ENCODE measurements at regions of chr19 and their contacts with region 1.

Region 1: DNA sequence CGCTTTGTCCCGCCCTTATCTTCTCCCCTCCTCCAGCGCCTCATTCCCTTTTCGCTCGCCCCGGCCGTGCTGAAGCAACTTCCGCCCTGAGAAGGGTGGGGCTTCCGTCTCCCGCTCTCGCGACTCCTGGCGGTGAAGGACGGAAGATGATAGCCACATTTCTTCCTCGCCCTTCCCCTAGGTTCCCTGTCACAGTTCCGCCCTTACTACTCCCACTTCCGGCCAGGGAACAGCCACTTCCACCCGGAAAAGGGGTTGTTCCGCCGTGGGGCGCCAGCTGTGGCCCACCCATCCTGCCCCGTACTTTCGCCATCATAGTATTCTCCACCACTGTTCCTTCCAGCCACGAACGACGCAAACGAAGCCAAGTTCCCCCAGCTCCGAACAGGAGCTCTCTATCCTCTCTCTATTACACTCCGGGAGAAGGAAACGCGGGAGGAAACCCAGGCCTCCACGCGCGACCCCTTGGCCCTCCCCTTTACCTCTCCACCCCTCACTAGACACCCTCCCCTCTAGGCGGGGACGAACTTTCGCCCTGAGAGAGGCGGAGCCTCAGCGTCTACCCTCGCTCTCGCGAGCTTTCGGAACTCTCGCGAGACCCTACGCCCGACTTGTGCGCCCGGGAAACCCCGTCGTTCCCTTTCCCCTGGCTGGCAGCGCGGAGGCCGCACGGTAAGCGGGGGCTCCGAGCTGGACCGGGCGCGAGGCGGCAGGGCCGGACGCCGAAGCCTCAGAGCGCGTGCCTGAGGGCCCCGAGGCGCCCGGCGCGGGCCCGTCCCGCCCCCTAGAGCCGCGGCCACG is at the start of gene RPS19:
- DNase-seq: peak; percentile 97
- ATAC-seq: peak; percentile 89
- H3K4me3 ChIP-seq: peak within 1 kb of the TSS; percentile 73 to 100
- H3K27ac ChIP-seq: peak within 1 kb of the TSS; percentile 99
- H3K4me1 ChIP-seq: peaks cover 26 to 47% of the 10 kb centered on the region in 2 experiments
- H3K27me3 ChIP-seq: no peaks in the 10 kb centered on the region
- CTCF ChIP-seq: peak in 2 of 3 experiments; percentile 34 to 62; a peak in 3 of 6 replicates
- POLR2A ChIP-seq: peak; percentile 86
- RAD21 ChIP-seq: no peak
- total RNA-seq, gene RPS19: 3,020 TPM

Region 2: DNA sequence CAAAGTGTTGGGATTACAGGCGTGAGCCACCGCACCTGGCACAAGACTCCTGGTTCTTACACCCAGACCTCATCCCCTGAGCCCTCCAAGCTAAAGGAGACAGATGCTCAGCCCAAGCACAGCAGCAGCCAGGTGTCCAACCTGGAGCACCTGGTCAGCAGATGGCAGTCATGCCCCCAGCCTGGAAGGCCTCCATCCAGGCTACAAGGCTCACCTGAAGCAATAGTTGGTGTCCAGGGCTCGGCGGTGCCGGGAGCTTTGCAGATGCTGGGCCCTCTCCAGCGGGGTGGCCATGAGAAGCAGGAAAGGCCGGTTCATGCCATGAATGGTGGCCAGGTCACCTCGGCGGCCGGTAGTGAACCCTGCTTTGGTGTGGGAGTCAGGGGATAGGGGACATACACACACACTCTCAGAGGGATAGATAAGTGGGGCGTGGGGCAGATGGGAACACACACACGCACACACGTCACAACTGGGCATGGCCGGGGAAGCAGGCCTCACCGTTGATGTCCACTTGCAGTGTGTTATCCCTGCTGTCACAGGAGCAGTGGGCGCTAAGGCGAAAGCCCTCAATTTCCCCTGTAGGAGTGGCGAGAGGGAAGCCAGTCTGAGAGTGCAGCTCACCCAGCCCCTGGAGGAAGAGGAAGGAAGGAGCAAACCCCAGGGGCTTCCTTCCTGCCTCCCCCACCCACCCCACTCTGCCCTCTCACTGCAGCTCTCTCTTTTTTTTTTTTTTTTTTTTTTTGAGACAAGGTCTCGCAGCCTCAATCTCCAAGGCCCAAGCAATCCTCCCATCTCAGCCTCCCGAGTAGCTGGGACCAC is 517.9 kb before region 1 on chr19:
- CTCF ChIA-PET with region 1: no interaction called
- POLR2A ChIA-PET with region 1: no interaction called
- RAD21 ChIA-PET with region 1: no interaction called
- intact Hi-C with region 1: no loop called
- DNase-seq: no peak
- ATAC-seq: peak; percentile 78
- H3K4me3 ChIP-seq: no peak overlapping the region
- H3K27ac ChIP-seq: no peak overlapping the region
- H3K4me1 ChIP-seq: peaks cover 0 to 9% of the 10 kb centered on the region in 2 experiments; a peak in 1 of 4 replicates
- H3K27me3 ChIP-seq: no peaks in the 10 kb centered on the region
- CTCF ChIP-seq: peak in 2 of 3 experiments; percentile 22 to 31; a peak in 3 of 6 replicates
- POLR2A ChIP-seq: no peak
- RAD21 ChIP-seq: peak; percentile 51

Region 3: GRCh38 chr19:41837981-41838708 is 21.7 kb before region 1 on chr19:
- CTCF ChIA-PET with region 1: interaction called, 11 read pairs
- POLR2A ChIA-PET with region 1: interaction called, 9 read pairs
- RAD21 ChIA-PET with region 1: no interaction called
- intact Hi-C with region 1: no loop called
- DNase-seq: no peak
- ATAC-seq: no peak
- H3K4me3 ChIP-seq: no peak overlapping the region
- H3K27ac ChIP-seq: no peak overlapping the region
- H3K4me1 ChIP-seq: no peaks in the 10 kb centered on the region
- H3K27me3 ChIP-seq: peaks cover 15% of the 10 kb centered on the region; the same call in 1 of the 2 replicates
- CTCF ChIP-seq: no peak
- POLR2A ChIP-seq: no peak
- RAD21 ChIP-seq: no peak

Region 4: DNA sequence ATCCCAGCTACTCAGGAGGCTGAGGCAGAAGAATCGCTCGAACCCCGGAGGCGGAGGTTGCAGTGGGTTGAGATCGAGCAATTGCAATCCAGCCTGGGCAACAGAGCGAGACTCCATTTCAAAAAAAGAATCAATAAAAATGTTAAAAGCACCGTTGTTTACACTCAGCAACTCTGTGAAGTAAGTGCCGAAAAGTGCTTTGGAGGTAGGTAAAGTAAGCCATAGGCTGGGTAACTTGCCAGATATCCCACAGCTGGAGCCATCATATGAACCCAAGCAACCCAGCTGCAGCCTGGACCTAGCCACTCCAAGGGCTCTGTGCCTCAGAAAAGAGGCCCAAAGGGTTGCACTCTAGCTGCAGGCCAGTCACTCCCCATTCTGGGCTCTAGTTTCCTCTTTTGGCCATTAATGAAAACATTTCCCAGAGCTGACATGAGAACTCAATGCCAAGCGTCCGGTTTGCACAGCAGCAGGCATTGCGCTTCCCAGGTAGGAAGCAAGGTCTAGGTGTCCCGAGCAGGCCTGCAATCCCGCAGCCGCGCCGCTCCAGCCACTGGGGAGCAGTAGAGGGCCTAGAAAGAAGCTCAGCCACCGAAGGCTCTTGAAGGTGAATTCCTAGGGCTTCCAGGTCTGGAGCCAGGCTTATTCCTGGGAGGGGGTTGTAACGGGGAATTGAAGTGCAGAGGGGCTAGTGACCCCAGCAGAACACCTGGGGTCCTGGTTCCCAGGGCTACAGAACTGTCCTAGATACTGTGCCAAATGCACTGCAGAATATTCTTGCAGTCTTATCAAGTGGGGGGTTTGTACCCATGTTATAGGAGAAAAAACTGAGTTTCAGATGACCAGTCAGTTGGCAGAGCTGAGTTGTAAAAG is 13.2 kb after region 1 on chr19:
- CTCF ChIA-PET with region 1: interaction called, 9 read pairs
- POLR2A ChIA-PET with region 1: interaction called, 36 read pairs
- RAD21 ChIA-PET with region 1: no interaction called
- intact Hi-C with region 1: no loop called
- DNase-seq: peak; percentile 63
- ATAC-seq: peak; percentile 83
- H3K4me3 ChIP-seq: no peak overlapping the region
- H3K27ac ChIP-seq: peak overlapping the region; percentile 51
- H3K4me1 ChIP-seq: peaks cover 0 to 27% of the 10 kb centered on the region in 2 experiments; a peak in 2 of 4 replicates
- H3K27me3 ChIP-seq: no peaks in the 10 kb centered on the region
- CTCF ChIP-seq: peak; percentile 86 to 94 (median 88)
- POLR2A ChIP-seq: no peak
- RAD21 ChIP-seq: peak; percentile 89

Region 5: GRCh38 chr19:41883821-41884733 is 24.3 kb after region 1 on chr19:
- CTCF ChIA-PET with region 1: interaction called, 3 read pairs
- POLR2A ChIA-PET with region 1: interaction called, 18 read pairs
- RAD21 ChIA-PET with region 1: no interaction called
- intact Hi-C with region 1: no loop called
- DNase-seq: peak; percentile 94
- ATAC-seq: peak; percentile 86
- H3K4me3 ChIP-seq: peak overlapping the region; percentile 97
- H3K27ac ChIP-seq: peak overlapping the region; percentile 73
- H3K4me1 ChIP-seq: peaks cover 29 to 54% of the 10 kb centered on the region in 2 experiments
- H3K27me3 ChIP-seq: no peaks in the 10 kb centered on the region
- CTCF ChIP-seq: no peak
- POLR2A ChIP-seq: peak; percentile 86
- RAD21 ChIP-seq: no peak

Region 6: GRCh38 chr19:41967054-41967783 is 107.4 kb after region 1 on chr19:
- CTCF ChIA-PET with region 1: no interaction called
- POLR2A ChIA-PET with region 1: no interaction called
- RAD21 ChIA-PET with region 1: no interaction called
- intact Hi-C with region 1: no loop called
- DNase-seq: no peak
- ATAC-seq: no peak
- H3K4me3 ChIP-seq: no peak overlapping the region
- H3K27ac ChIP-seq: no peak overlapping the region
- H3K4me1 ChIP-seq: no peaks in the 10 kb centered on the region
- H3K27me3 ChIP-seq: no peaks in the 10 kb centered on the region
- CTCF ChIP-seq: no peak
- POLR2A ChIP-seq: no peak
- RAD21 ChIP-seq: no peak

Region 7: GRCh38 chr19:42038666-42039065 is 178.8 kb after region 1 on chr19:
- CTCF ChIA-PET with region 1: no interaction called
- POLR2A ChIA-PET with region 1: no interaction called
- RAD21 ChIA-PET with region 1: no interaction called
- intact Hi-C with region 1: no loop called
- DNase-seq: no peak
- ATAC-seq: no peak
- H3K4me3 ChIP-seq: no peak overlapping the region
- H3K27ac ChIP-seq: no peak overlapping the region
- H3K4me1 ChIP-seq: peaks cover 6 to 14% of the 10 kb centered on the region in 2 experiments
- H3K27me3 ChIP-seq: no peaks in the 10 kb centered on the region
- CTCF ChIP-seq: no peak
- POLR2A ChIP-seq: no peak
- RAD21 ChIP-seq: no peak